Activated CD4-positive, alpha-beta memory T cell treated with anti-CD3 and anti-CD28 coated beads, Interleukin-2, amount 10 ng/mL, durations not matched to agents 7 days and 5 days (primary cell): ENCODE measurements at regions of chr1 and their contacts with region 1.

Region 1: GRCh38 chr1:19596714-19597495 is 47.2 kb upstream of the NBL1 start:
- DNase-seq: peak; percentile 97
- H3K4me3 Mint-ChIP-seq: peak overlapping the region; percentile 95
- H3K27ac Mint-ChIP-seq: peak overlapping the region; percentile 99
- H3K4me1 Mint-ChIP-seq: peaks cover 49% of the 10 kb centered on the region
- H3K27me3 Mint-ChIP-seq: no peaks in the 10 kb centered on the region

Region 2: DNA sequence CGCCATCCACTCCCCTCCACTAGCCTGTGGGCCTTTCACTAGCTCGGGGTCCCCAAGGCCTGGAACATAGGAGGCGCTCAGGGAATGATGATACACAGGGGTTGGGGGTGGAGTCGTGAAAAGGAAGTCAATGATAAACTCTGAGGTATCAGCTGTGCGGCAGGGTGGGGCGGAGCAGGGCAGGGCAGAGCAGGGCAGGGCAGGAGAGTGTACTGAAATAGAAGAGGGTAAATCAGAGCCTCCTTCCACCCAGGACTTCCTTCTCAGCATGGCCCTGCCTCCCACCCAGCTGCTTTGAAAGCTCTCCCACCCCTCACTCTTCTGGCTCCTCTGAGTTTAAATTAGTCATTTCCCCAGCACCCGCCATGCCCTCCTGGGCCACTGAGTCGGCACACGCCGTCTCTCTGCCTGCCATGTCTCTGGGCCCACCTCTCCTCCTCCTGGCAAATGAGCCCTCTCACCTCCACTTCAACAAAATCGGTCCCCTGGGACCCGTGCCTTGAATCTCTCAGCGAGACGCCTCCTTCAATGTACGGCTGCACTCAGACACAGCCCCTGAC is 128.4 kb before region 1 on chr1:
- CTCF ChIA-PET with region 1: interaction called, 3 read pairs
- POLR2A ChIA-PET with region 1: interaction called, 10 read pairs
- DNase-seq: peak; percentile 79
- H3K4me3 Mint-ChIP-seq: peak overlapping the region; percentile 59
- H3K27ac Mint-ChIP-seq: peak overlapping the region; percentile 92
- H3K4me1 Mint-ChIP-seq: peaks cover 92% of the 10 kb centered on the region
- H3K27me3 Mint-ChIP-seq: no peaks in the 10 kb centered on the region

Region 3: DNA sequence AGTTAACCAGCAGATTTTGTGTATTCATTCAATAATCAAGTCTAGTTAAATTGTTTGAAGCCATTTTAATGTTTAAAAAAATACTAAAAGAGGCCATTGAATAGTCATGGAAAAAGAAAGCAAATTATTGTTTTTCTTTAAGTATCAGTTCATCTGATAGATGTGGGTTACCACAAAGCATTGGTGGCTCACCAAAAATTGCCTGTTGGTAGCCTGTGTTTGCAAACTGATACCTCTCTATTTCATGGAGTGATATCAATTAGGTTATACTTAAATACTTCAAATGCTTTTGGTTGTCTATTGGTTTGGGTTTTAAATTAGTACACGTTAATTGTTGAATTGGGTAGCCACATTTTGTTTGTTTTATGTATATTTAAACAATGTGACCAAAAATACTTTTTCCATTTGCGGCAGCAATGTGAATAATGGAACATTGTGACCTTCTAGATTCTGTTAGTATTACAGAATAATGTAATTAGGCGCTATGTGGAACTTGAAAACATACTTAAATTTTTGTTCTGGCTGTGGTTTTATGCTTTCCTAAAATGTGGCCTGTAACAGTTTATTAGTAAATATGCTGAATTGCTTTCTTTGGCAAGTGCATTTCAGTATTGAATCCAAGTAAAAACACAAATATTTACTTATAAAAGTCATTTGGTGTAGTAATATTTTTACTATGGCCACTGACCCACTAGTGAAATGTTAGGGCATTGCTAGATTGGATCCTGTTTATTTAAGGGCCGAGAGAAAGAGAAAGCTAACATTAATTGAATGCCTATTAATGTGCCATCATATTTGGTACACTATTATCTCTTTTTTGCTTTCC is 10.1 kb after region 1 on chr1:
- CTCF ChIA-PET with region 1: interaction called, 5 read pairs
- POLR2A ChIA-PET with region 1: interaction called, 44 read pairs
- DNase-seq: peak; percentile 76
- H3K4me3 Mint-ChIP-seq: peak overlapping the region; percentile 43
- H3K27ac Mint-ChIP-seq: peak overlapping the region; percentile 69
- H3K4me1 Mint-ChIP-seq: peaks cover 48% of the 10 kb centered on the region
- H3K27me3 Mint-ChIP-seq: no peaks in the 10 kb centered on the region

Region 4: GRCh38 chr1:19643602-19644394 is 46.9 kb after region 1 on chr1 and contains the start of gene NBL1:
- CTCF ChIA-PET with region 1: no interaction called
- POLR2A ChIA-PET with region 1: interaction called, 31 read pairs
- DNase-seq: peak; percentile 77
- H3K4me3 Mint-ChIP-seq: peak within 1 kb of the TSS; percentile 90
- H3K27ac Mint-ChIP-seq: peak within 1 kb of the TSS; percentile 72
- H3K4me1 Mint-ChIP-seq: peaks cover 35% of the 10 kb centered on the region
- H3K27me3 Mint-ChIP-seq: peaks cover 20% of the 10 kb centered on the region
- total RNA-seq, gene NBL1: 25.4 to 29.8 TPM